ENCODE measurements at regions of chr3 and their contacts with region 1.

Region 1: DNA sequence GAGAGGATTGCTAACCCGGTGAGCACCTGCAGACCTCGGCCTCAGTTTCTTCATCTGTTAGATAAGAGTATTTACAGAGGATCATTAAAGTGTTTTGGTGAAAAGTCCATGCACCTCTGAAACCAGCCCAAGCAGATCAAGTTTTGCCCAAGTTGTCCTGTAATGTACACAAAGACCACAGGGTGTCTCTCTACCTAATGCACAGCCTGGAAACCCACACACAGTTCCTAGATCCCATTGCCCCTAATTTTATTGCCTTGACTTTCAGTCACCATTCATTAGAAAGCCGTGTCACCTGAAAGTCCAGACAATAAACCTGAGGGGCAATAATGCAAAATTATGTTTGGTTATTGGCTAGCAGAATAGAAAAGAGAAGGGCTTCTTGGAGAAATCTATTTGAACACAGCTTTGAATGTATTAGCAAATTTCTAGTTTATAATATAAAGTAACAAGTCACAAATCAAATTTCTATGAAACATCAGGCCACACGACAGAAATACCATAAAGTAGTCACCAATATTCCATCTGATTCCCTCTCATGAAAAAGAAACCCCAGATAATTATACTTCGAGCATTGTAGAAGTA is 161.3 kb upstream of the SLC2A2 start:
- DNase-seq: peak in 5 of 9 donors; percentile 6 to 43 (median 31)
- ATAC-seq: peak; percentile 68
- H3K4me3 ChIP-seq: no peak overlapping the region
- H3K4me3 Mint-ChIP-seq: no peak overlapping the region
- H3K27ac ChIP-seq: no peak overlapping the region
- H3K27ac Mint-ChIP-seq: no peak overlapping the region
- H3K4me1 ChIP-seq: no peaks in the 10 kb centered on the region
- H3K4me1 Mint-ChIP-seq: peaks cover 9 to 50% (median 19%) of the 10 kb centered on the region in 7 donors
- H3K27me3 ChIP-seq: no peaks in the 10 kb centered on the region
- H3K27me3 Mint-ChIP-seq: no peaks in the 10 kb centered on the region

Region 2: GRCh38 chr3:171269542-171269941 is 81.7 kb after region 1 on chr3:
- CTCF ChIA-PET with region 1: interaction called, 3 read pairs
- POLR2A ChIA-PET with region 1: no interaction called
- intact Hi-C with region 1: loop called (anchors 1 to 5 kb)
- DNase-seq: peak in 3 of 9 donors; percentile 34 to 50 (median 44)
- ATAC-seq: peak; percentile 76
- H3K4me3 ChIP-seq: peak overlapping the region; percentile 3
- H3K4me3 Mint-ChIP-seq: peak overlapping the region; percentile 13 to 85 (median 60)
- H3K27ac ChIP-seq: peak overlapping the region; percentile 52
- H3K27ac Mint-ChIP-seq: peak overlapping the region in 8 of 9 donors; percentile 65 to 93 (median 84)
- H3K4me1 ChIP-seq: peaks cover 32 to 44% of the 10 kb centered on the region in 2 donors
- H3K4me1 Mint-ChIP-seq: peaks cover 43 to 95% (median 88%) of the 10 kb centered on the region in 7 donors
- H3K27me3 ChIP-seq: no peaks in the 10 kb centered on the region
- H3K27me3 Mint-ChIP-seq: no peaks in the 10 kb centered on the region

Region 3: GRCh38 chr3:171277456-171278298 is 89.9 kb after region 1 on chr3:
- CTCF ChIA-PET with region 1: interaction called, 3 read pairs
- POLR2A ChIA-PET with region 1: no interaction called
- intact Hi-C with region 1: loop called in 1 of 2 experiments (anchors 1 kb)
- DNase-seq: no peak
- ATAC-seq: no peak
- H3K4me3 ChIP-seq: no peak overlapping the region
- H3K4me3 Mint-ChIP-seq: peak overlapping the region in 1 of 10 donors; percentile 9
- H3K27ac ChIP-seq: no peak overlapping the region
- H3K27ac Mint-ChIP-seq: peak overlapping the region in 2 of 9 donors; percentile 21 to 34
- H3K4me1 ChIP-seq: peaks cover 6 to 18% of the 10 kb centered on the region in 2 donors
- H3K4me1 Mint-ChIP-seq: peaks cover 39 to 85% (median 73%) of the 10 kb centered on the region in 7 donors
- H3K27me3 ChIP-seq: no peaks in the 10 kb centered on the region
- H3K27me3 Mint-ChIP-seq: no peaks in the 10 kb centered on the region

Region 4: GRCh38 chr3:171542976-171543375 is 355.2 kb after region 1 on chr3:
- CTCF ChIA-PET with region 1: no interaction called
- POLR2A ChIA-PET with region 1: no interaction called
- intact Hi-C with region 1: loop called in 1 of 2 experiments (anchors 1 kb)
- DNase-seq: no peak
- ATAC-seq: no peak
- H3K4me3 ChIP-seq: no peak overlapping the region
- H3K4me3 Mint-ChIP-seq: no peak overlapping the region
- H3K27ac ChIP-seq: no peak overlapping the region
- H3K27ac Mint-ChIP-seq: no peak overlapping the region
- H3K4me1 ChIP-seq: peaks cover 0 to 4% of the 10 kb centered on the region in 2 donors
- H3K4me1 Mint-ChIP-seq: peaks cover 0 to 16% (median 5%) of the 10 kb centered on the region in 7 donors
- H3K27me3 ChIP-seq: no peaks in the 10 kb centered on the region
- H3K27me3 Mint-ChIP-seq: peaks cover 0 to 2% (median 0%) of the 10 kb centered on the region in 5 donors